ENCODE measurements at regions of chr19 and their contacts with region 1.

Region 1: DNA sequence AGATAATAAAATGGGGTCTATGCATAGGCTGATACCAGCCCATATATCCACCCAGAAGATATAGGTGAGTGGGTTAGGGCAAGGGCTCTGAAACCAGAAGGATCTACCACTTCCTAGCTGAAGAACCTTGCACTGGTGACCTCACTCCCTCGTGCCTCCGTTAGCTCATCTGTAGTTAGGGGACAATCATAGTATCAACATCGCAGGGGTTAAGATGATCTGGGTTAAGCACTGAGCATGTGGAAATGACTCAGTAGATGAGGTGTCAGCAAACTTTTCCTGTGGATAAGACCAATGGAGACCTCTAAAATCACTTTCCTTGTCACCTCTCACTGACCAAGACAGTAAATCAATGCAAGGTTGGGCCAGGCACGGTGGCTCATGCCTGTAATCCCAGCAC is 30.5 kb downstream of the TNFSF14 start:
- DNase-seq: peak; percentile 77
- H3K4me3 Mint-ChIP-seq: peak overlapping the region; percentile 40
- H3K27ac Mint-ChIP-seq: peak overlapping the region; percentile 87
- H3K4me1 Mint-ChIP-seq: peaks cover 36% of the 10 kb centered on the region
- H3K27me3 Mint-ChIP-seq: no peaks in the 10 kb centered on the region

Region 2: GRCh38 chr19:6475321-6476108 is 163.9 kb before region 1 on chr19:
- intact Hi-C with region 1: no loop called
- DNase-seq: no peak
- H3K4me3 Mint-ChIP-seq: no peak overlapping the region
- H3K27ac Mint-ChIP-seq: no peak overlapping the region
- H3K4me1 Mint-ChIP-seq: peaks cover 8% of the 10 kb centered on the region
- H3K27me3 Mint-ChIP-seq: no peaks in the 10 kb centered on the region

Region 3: GRCh38 chr19:6602729-6603114 is 36.7 kb before region 1 on chr19:
- intact Hi-C with region 1: no loop called
- DNase-seq: no peak
- H3K4me3 Mint-ChIP-seq: no peak overlapping the region
- H3K27ac Mint-ChIP-seq: no peak overlapping the region
- H3K4me1 Mint-ChIP-seq: peaks cover 12% of the 10 kb centered on the region
- H3K27me3 Mint-ChIP-seq: peaks cover 2% of the 10 kb centered on the region

Region 4: GRCh38 chr19:6654347-6655310 is 15.2 kb after region 1 on chr19:
- intact Hi-C with region 1: loop called (anchors 1 kb)
- DNase-seq: peak; percentile 87
- H3K4me3 Mint-ChIP-seq: peak overlapping the region; percentile 83
- H3K27ac Mint-ChIP-seq: peak overlapping the region; percentile 98
- H3K4me1 Mint-ChIP-seq: peaks cover 57% of the 10 kb centered on the region
- H3K27me3 Mint-ChIP-seq: no peaks in the 10 kb centered on the region

Measured in activated CD4-positive, alpha-beta T cell treated with anti-CD3 and anti-CD28 coated beads, Interleukin-2, amount 10 ng/mL, durations not matched to agents 24 days and 14 days (primary cell).